ENCODE measurements at regions of chr5 and their contacts with region 1.

Region 1: GRCh38 chr5:142356716-142357473 is 32.1 kb upstream of the SPRY4 start:
- DNase-seq: peak; percentile 49 to 70
- ATAC-seq: peak; percentile 80 to 87
- H3K4me3 ChIP-seq: peak overlapping the region; percentile 54 to 74 (median 62)
- H3K27ac ChIP-seq: peak overlapping the region; percentile 75 to 86 (median 78)
- H3K4me1 ChIP-seq: peaks cover 10 to 16% of the 10 kb centered on the region in 2 donors
- H3K27me3 ChIP-seq: peaks cover 4 to 25% (median 23%) of the 10 kb centered on the region in 3 donors
- CTCF ChIP-seq: no peak
- POLR2A ChIP-seq: peak; percentile 45 to 67

Region 2: DNA sequence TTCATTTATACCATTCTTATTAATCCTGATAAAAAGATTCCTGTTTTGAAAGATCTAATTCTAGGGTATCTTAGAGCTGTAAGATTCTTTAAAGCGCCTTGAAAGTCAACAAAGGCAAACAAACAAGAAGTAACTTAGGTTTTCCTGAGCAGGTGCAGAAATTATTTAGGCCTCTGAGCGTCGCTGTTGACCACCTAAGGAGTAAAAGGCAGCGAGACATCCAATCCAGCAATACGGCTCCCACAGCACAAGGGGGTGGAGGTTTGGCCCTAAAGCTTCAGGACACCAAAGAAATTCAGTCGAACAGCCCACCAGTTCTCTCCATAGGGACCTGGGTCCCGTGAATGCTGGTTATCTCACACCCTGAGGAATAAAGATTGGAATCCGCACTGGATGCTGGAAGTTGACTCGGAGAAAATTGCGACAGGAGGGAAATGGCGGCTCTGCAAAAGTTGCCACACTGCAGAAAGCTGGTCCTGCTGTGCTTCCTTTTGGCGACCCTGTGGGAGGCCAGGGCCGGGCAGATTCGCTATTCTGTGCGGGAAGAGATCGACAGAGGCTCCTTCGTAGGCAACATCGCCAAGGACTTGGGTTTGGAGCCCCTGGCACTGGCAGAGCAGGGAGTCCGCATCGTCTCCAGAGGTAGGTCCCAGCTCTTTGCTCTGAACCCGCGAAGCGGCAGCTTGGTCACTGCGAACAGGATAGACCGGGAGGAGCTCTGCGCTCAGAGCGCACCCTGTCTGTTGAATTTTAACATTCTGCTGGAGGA is 1018.2 kb before region 1 on chr5 and contains the start of gene PCDHGA2:
- in situ Hi-C with region 1: no loop called
- intact Hi-C with region 1: no loop called
- DNase-seq: no peak
- ATAC-seq: peak; percentile 45 to 66
- H3K4me3 ChIP-seq: peak within 1 kb of the TSS; percentile 12 to 58 (median 48)
- H3K27ac ChIP-seq: peak within 1 kb of the TSS; percentile 30 to 77 (median 70)
- H3K4me1 ChIP-seq: no peaks in the 10 kb centered on the region
- H3K27me3 ChIP-seq: peaks cover under 1 to 11% (median 10%) of the 10 kb centered on the region in 3 donors
- CTCF ChIP-seq: peak; percentile 40 to 64 (median 60)
- POLR2A ChIP-seq: no peak
- total RNA-seq, gene PCDHGA2: 0.66 to 1.5 (median 1.2) TPM

Region 3: GRCh38 chr5:142542906-142543305 is 186.0 kb after region 1 on chr5:
- in situ Hi-C with region 1: no loop called
- intact Hi-C with region 1: loop called (anchors 5 kb)
- DNase-seq: no peak
- ATAC-seq: peak; percentile 77 to 84
- H3K4me3 ChIP-seq: no peak overlapping the region
- H3K27ac ChIP-seq: peak overlapping the region; percentile 40 to 51 (median 46)
- H3K4me1 ChIP-seq: peaks cover 5 to 13% of the 10 kb centered on the region in 2 donors
- H3K27me3 ChIP-seq: no peaks in the 10 kb centered on the region
- CTCF ChIP-seq: peak in 1 of 5 experiments; percentile 40
- POLR2A ChIP-seq: no peak